HEK293 (cell line): ENCODE measurements at regions of chr21 and their contacts with region 1.

Region 1: DNA sequence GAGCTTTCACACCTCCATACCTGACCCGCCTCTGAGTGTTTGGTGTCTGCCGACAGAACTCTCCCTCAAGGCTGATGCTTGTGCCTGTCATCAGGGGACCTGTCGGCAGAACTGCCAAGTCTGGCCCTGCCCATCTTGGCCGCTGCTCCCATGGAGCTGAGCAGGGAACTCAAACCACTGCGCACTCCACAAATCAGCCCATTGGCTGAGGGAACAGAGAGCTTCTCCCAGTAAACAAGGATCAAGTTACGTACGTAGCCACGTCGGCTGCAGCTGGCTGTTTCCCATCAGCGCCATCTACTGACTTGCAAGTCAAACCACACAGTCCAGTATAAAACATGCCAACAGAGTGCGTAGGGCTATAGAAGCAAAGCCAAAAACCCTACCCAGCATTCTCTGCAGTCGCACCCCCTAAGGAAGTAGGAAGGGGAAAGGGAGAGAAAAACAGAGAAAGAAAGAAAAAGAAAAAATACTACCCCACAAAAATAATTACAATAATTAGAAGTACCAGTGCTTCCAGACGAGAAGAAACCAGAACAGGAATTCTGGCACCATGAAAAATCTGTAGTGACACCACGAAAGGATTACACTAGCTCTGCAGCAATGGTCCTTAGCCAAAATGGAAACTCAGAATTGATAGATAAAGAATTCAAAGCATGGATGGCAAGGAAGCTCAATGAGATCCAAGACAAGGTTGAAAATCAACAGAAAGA is 13.1 kb downstream of the KRTAP13-1 start:
- H3K4me3 ChIP-seq: no peak overlapping the region
- H3K27ac ChIP-seq: no peak overlapping the region
- H3K4me1 ChIP-seq: no peaks in the 10 kb centered on the region
- CTCF ChIP-seq: no peak

Region 2: DNA sequence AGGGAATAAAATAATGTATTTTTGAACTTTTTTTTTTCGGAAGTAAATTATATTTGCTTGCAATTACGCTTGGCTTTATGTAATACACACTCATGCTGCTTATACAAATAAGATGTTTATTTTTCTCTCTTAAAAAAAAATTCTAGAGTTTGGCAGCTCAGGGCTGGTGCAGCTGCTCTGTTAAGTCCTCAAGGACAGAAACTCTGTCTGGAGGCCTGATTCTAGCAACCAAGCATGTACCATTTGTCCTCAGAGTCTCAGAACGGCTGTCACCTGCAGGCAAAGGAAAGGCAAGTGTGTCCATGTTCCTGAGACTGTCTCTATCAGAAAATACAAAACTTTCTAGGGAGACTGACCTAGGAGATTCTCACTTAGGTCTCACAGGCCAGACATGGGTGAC is 219.2 kb before region 1 on chr21:
- CTCF ChIA-PET with region 1: no interaction called
- POLR2A ChIA-PET with region 1: no interaction called
- H3K4me3 ChIP-seq: no peak overlapping the region
- H3K27ac ChIP-seq: no peak overlapping the region
- H3K4me1 ChIP-seq: no peaks in the 10 kb centered on the region
- CTCF ChIP-seq: no peak

Region 3: DNA sequence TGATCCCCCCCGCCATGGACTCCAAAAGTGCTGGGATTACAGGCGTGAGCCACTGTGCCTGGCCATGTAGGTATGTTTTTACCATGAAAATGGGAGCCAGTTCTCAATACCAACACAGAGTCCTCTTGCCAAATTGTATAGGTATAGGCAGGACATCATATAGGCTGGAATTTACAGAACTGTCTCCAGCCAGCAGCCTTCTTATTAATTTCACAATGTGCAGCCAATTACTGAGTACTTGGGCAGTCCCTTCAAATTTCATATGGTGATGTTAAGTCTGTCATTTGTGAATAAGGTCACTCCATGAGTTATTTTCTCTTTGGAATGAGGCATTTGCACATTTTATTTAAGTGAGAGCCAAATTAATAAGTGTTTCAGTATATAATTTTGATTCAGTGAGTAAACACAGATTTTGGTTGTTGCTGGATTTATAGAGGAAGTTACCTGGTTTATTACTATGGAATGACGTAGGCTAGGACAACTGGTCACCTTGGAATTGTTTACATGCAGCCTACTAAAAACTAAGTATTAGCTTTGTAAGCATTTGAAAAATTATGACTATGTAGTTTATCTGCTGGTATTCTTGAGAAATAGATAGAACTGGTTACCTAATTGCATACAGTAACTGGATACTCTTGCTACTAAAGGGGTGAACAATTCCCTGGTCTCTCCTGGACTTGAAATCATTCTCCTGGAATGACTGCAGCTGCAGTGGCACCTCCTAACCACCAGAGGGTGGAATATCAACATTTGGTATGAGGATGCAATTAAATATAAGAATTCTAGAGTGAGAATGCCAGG is 68.3 kb before region 1 on chr21:
- CTCF ChIA-PET with region 1: interaction called, 18 read pairs
- POLR2A ChIA-PET with region 1: no interaction called
- H3K4me3 ChIP-seq: no peak overlapping the region
- H3K27ac ChIP-seq: no peak overlapping the region
- H3K4me1 ChIP-seq: no peaks in the 10 kb centered on the region
- CTCF ChIP-seq: no peak

Region 4: DNA sequence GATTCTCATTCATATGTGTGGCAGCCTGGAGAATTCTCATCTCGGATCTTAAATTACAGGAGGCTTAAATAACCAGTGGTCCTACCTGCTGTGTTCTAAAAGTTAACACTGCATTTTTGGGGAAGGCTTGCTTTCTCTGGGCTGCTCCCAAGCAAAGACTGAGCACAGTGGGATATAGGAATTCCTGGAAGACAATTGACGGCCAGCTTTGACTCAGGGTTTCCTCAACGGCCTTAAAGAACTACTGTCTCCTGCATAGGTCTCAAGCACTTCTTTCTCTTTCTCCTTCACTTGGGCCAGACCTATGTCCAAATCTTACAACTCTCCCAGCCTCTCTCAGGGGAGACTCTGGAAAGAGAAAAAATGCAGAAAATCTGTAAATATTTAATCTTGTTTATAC is 17.8 kb after region 1 on chr21:
- CTCF ChIA-PET with region 1: interaction called, 10 read pairs
- POLR2A ChIA-PET with region 1: no interaction called
- H3K4me3 ChIP-seq: no peak overlapping the region
- H3K27ac ChIP-seq: no peak overlapping the region
- H3K4me1 ChIP-seq: no peaks in the 10 kb centered on the region
- CTCF ChIP-seq: no peak

Region 5: DNA sequence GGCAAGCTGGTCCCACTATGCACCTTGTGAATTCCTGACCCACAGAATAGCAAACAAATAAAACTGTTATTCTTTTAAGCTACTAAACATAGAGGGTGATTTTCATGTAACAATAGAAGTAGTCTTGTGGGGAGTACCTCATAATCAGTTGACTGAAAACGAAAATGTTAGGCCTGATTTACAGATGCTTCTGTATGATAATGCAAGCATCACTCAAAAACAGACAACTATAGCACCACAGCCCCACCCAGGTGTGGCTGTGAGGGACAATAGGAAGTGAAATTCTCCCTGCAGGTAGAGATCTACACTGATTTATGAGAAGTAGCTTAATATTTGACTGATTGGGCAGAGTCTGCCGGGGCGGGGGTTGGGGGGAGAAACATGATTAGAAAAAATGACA is 655.9 kb after region 1 on chr21:
- CTCF ChIA-PET with region 1: no interaction called
- POLR2A ChIA-PET with region 1: no interaction called
- H3K4me3 ChIP-seq: no peak overlapping the region
- H3K27ac ChIP-seq: no peak overlapping the region
- H3K4me1 ChIP-seq: no peaks in the 10 kb centered on the region
- CTCF ChIP-seq: no peak